WTC11 (cell line): ENCODE measurements at regions of chr9 and their contacts with region 1.

Region 1: DNA sequence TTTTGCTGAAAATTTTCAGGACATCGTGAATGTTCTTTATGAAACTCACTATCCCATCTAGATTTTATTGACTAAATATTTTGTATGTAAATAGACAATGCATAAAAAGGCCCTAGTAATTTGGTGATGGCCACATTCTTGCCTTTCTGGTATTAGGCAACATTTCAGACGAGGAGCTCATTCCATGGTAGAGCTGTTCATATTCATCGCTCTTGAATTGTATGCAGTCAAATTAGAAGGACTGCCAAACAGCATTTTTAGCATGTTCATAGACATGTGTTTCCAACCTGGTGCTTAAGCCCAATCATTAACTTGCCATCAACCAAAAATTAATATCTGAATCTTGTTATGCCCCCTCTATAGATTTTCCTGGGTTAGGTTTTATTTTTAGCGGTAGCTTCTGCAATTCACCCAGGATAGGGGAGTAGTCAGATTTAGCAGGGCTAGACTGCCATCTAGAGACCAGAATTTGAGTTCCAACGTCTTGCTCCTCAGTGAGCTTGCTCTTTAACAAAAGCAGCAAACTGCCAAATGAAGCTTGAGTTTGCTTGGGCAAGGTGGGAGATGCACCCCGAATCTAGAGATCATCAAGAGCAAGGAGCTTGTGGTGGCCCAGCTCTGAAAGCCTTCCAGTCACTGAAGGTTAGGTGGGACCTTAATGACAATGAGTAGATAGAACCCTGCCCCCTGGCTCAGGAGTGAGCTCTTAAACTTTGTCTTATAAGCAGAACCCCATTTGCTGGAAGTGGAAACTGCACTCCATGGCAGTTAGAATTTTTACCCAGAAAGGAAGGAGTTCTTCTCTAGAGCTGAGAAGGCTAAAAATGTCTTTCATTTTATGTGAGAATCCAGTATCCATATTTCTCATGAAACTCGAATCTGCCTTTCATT is 456.2 kb downstream of the RASEF start:
- DNase-seq: peak; percentile 48
- ATAC-seq: peak; percentile 96
- H3K4me3 Mint-ChIP-seq: no peak overlapping the region
- H3K27ac Mint-ChIP-seq: no peak overlapping the region
- H3K4me1 Mint-ChIP-seq: peaks cover 15% of the 10 kb centered on the region
- H3K27me3 Mint-ChIP-seq: no peaks in the 10 kb centered on the region
- CTCF ChIP-seq: 0 out of 2 replicates have a peak, but pooled peaks have one; percentile 30

Region 2: GRCh38 chr9:82188817-82189216 is 417.9 kb before region 1 on chr9:
- CTCF ChIA-PET with region 1: interaction called, 10 read pairs
- POLR2A ChIA-PET with region 1: no interaction called
- DNase-seq: no peak
- ATAC-seq: peak; percentile 82
- H3K4me3 Mint-ChIP-seq: no peak overlapping the region
- H3K27ac Mint-ChIP-seq: no peak overlapping the region
- H3K4me1 Mint-ChIP-seq: peaks cover 8% of the 10 kb centered on the region
- H3K27me3 Mint-ChIP-seq: no peaks in the 10 kb centered on the region
- CTCF ChIP-seq: no peak

Region 3: GRCh38 chr9:82549174-82549821 is 57.4 kb before region 1 on chr9:
- CTCF ChIA-PET with region 1: interaction called, 21 read pairs
- POLR2A ChIA-PET with region 1: no interaction called
- DNase-seq: peak; percentile 20
- ATAC-seq: peak; percentile 66
- H3K4me3 Mint-ChIP-seq: no peak overlapping the region
- H3K27ac Mint-ChIP-seq: no peak overlapping the region
- H3K4me1 Mint-ChIP-seq: peaks cover 35% of the 10 kb centered on the region
- H3K27me3 Mint-ChIP-seq: no peaks in the 10 kb centered on the region
- CTCF ChIP-seq: peak; percentile 20; the same call in 1 of the 2 replicates

Region 4: GRCh38 chr9:82763656-82764055 is 156.9 kb after region 1 on chr9:
- CTCF ChIA-PET with region 1: interaction called, 28 read pairs
- POLR2A ChIA-PET with region 1: no interaction called
- DNase-seq: peak; percentile 47
- ATAC-seq: peak; percentile 98
- H3K4me3 Mint-ChIP-seq: no peak overlapping the region
- H3K27ac Mint-ChIP-seq: no peak overlapping the region
- H3K4me1 Mint-ChIP-seq: peaks cover 22% of the 10 kb centered on the region
- H3K27me3 Mint-ChIP-seq: no peaks in the 10 kb centered on the region
- CTCF ChIP-seq: no peak

Region 5: GRCh38 chr9:82912645-82913044 is 305.9 kb after region 1 on chr9:
- CTCF ChIA-PET with region 1: interaction called, 12 read pairs
- POLR2A ChIA-PET with region 1: no interaction called
- DNase-seq: no peak
- ATAC-seq: peak; percentile 67
- H3K4me3 Mint-ChIP-seq: no peak overlapping the region
- H3K27ac Mint-ChIP-seq: no peak overlapping the region
- H3K4me1 Mint-ChIP-seq: peaks cover 16% of the 10 kb centered on the region
- H3K27me3 Mint-ChIP-seq: peaks cover 17% of the 10 kb centered on the region
- CTCF ChIP-seq: no peak

Region 6: DNA sequence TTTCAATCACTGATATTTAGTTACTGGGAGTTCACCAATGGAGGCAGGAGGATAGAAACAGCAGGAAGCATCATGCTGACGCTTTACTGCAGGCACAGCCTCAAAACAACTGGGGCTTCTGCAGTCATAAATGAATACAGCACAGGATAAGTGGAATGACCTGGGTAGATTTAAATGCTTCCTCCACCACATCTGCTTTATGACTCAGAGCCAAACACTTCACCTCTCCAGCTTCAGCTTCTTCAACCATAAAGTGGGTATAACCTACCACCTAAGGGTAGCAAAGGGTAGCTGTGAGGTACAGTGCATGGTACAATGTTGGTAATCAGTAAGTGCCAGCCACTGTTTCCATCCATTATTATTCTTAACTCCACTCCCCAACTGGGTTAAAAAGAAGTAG is 427.9 kb after region 1 on chr9:
- CTCF ChIA-PET with region 1: no interaction called
- POLR2A ChIA-PET with region 1: no interaction called
- DNase-seq: no peak
- ATAC-seq: no peak
- H3K4me3 Mint-ChIP-seq: no peak overlapping the region
- H3K27ac Mint-ChIP-seq: no peak overlapping the region
- H3K4me1 Mint-ChIP-seq: 0 out of 2 replicates have a peak, but pooled peaks cover 3% of the 10 kb centered on the region
- H3K27me3 Mint-ChIP-seq: no peaks in the 10 kb centered on the region
- CTCF ChIP-seq: no peak